Breast epithelium (tissue), 4 donors: ENCODE measurements at regions of chr10 and their contacts with region 1.

Region 1: GRCh38 chr10:34861293-34862021 is 46.4 kb upstream of the PARD3 start:
- DNase-seq: no peak
- H3K4me3 ChIP-seq: no peak overlapping the region
- H3K27ac ChIP-seq: no peak overlapping the region
- H3K4me1 ChIP-seq: no peaks in the 10 kb centered on the region
- H3K27me3 ChIP-seq: no peaks in the 10 kb centered on the region
- CTCF ChIP-seq: no peak
- POLR2A ChIP-seq: no peak

Region 2: GRCh38 chr10:34801097-34801733 is 60.2 kb before region 1 on chr10:
- intact Hi-C with region 1: no loop called
- DNase-seq: no peak
- H3K4me3 ChIP-seq: no peak overlapping the region
- H3K27ac ChIP-seq: no peak overlapping the region
- H3K4me1 ChIP-seq: no peaks in the 10 kb centered on the region
- H3K27me3 ChIP-seq: no peaks in the 10 kb centered on the region
- CTCF ChIP-seq: no peak
- POLR2A ChIP-seq: no peak

Region 3: DNA sequence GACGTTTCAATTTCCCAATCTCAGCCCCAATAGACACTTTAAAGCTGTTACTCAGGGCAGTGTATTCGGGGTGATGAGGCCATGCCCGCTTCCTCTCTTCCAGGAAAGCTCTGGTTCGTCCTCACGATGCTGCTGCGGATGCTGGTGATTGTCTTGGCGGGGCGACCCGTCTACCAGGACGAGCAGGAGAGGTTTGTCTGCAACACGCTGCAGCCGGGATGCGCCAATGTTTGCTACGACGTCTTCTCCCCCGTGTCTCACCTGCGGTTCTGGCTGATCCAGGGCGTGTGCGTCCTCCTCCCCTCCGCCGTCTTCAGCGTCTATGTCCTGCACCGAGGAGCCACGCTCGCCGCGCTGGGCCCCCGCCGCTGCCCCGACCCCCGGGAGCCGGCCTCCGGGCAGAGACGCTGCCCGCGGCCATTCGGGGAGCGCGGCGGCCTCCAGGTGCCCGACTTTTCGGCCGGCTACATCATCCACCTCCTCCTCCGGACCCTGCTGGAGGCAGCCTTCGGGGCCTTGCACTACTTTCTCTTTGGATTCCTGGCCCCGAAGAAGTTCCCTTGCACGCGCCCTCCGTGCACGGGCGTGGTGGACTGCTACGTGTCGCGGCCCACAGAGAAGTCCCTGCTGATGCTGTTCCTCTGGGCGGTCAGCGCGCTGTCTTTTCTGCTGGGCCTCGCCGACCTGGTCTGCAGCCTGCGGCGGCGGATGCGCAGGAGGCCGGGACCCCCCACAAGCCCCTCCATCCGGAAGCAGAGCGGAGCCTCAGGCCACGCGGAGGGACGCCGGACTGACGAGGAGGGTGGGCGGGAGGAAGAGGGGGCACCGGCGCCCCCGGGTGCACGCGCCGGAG is 746.2 kb after region 1 on chr10:
- intact Hi-C with region 1: loop called (anchors 10 kb)
- DNase-seq: no peak
- H3K4me3 ChIP-seq: peak overlapping the region; percentile 39 to 72 (median 58)
- H3K27ac ChIP-seq: no peak overlapping the region
- H3K4me1 ChIP-seq: no peaks in the 10 kb centered on the region
- H3K27me3 ChIP-seq: peaks cover 0 to 12% of the 10 kb centered on the region in 2 donors
- CTCF ChIP-seq: no peak
- POLR2A ChIP-seq: no peak